ENCODE measurements at regions of chr2 and their contacts with region 1.

Region 1: GRCh38 chr2:197705121-197705911 is at the start of gene MARS2:
- DNase-seq: peak; percentile 97
- ATAC-seq: peak; percentile 96
- total RNA-seq, gene MARS2: 7.5 TPM

Region 2: GRCh38 chr2:197453161-197453914 is 252.0 kb before region 1 on chr2 and contains the start of gene COQ10B:
- intact Hi-C with region 1: loop called (anchors 5 kb)
- DNase-seq: peak; percentile 100
- ATAC-seq: peak; percentile 99
- total RNA-seq, gene COQ10B: 20.5 TPM

Region 3: GRCh38 chr2:197487385-197487784 is 217.9 kb before region 1 on chr2:
- intact Hi-C with region 1: no loop called
- DNase-seq: no peak
- ATAC-seq: no peak

Region 4: GRCh38 chr2:197515739-197516392 is 189.4 kb before region 1 on chr2 and contains the start of gene MOB4:
- intact Hi-C with region 1: loop called (anchors 10 kb)
- DNase-seq: peak; percentile 97
- ATAC-seq: peak; percentile 99
- total RNA-seq, gene MOB4: 31.0 TPM

Region 5: GRCh38 chr2:197777823-197778407 is 72.6 kb after region 1 on chr2:
- intact Hi-C with region 1: loop called (anchors 2 kb)
- DNase-seq: no peak
- ATAC-seq: no peak

Region 6: DNA sequence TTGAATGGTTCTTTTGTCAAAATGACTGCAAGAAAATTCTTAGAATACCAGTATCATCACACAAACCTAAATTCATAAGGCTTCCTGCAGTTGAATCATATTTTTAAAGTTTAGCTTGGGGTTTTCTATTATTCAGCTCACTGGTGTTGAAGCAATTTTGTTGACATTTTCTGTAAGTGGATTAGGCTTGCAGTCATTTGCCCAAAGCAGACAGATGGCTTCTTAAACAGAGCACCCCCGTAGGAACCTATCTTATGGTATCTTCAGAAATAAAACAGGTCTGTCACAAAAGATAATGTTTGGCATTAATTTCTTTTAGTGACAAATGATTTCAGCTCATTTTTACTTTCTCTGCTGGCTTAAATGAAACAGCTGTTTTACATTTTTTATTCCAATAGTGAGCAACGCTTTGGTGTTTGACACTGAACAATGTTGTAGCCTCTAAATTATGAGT is 430.2 kb after region 1 on chr2:
- intact Hi-C with region 1: loop called (anchors 10 kb)
- DNase-seq: no peak
- ATAC-seq: no peak

Region 7: DNA sequence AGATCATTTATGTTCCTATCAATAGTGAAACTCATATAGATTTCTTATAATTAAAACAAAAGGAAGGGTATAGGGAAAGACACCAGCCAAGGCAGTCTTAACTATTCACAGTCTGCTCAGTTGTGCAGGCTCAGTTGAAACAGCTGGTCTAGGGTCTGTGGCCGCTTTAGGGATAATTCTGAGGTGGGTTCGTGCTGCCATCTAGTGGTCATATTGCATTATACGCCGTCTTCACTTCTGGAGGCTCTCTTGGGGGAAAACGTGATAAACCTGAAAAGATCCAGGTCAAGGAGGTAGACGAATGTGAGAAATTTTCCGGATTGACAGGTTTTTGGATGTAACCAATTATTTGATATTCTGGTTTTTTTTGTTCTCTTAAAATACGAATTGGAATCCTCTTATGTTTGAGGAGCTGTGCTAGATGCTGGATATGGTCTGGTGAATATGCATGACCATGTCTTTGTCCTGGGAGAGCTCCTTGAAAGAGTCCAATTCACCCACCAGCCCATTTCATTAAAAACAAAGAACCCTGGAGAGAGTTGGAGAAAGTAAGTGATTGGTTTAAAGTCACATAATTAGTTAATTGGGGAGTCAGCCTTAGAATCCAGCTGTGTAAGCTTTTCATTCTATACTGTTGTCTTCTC is 591.5 kb after region 1 on chr2:
- intact Hi-C with region 1: loop called (anchors 5 kb)
- DNase-seq: no peak
- ATAC-seq: peak; percentile 51